Activated naive CD4-positive, alpha-beta T cell treated with anti-CD3 and anti-CD28 coated beads for 36 hours (primary cell): ENCODE measurements at regions of chr5 and their contacts with region 1.

Region 1: GRCh38 chr5:14399054-14399692 is 182.4 kb upstream of the OTULINL start:
- DNase-seq: no peak
- H3K4me3 Mint-ChIP-seq: no peak overlapping the region
- H3K27ac Mint-ChIP-seq: no peak overlapping the region
- H3K4me1 Mint-ChIP-seq: peaks cover 12% of the 10 kb centered on the region
- H3K27me3 Mint-ChIP-seq: no peaks in the 10 kb centered on the region

Region 2: DNA sequence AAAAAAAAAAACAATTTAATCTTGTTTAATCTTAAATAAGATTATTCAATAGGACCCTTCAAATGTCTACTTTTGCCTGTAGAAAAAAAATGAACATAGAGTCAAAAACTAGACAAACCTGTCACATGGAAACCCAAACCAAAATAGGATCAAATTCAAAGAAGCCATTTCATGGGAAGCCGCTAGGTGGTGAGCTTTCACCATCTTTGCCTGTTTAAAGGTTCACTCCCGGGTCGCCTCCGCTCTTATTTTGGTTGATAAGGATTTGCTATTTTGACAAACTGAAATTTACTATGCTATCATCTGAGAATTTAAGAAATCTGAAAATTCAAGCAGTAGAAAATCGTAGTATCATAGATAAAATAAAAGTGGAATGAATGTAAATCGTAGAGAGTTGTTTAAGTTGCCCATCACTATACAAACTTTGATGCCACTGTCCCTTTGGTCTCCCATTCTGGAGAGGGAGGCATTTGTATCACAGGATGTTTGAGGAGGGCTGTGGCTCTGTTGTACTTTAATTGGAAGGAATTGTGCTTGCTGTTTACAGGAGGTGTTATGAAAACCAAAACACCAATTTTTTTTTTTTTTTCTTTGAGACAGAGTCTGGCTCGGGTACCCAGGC is 411.2 kb before region 1 on chr5:
- CTCF ChIA-PET with region 1: no interaction called
- intact Hi-C with region 1: loop called (anchors 2 kb)
- DNase-seq: peak; percentile 55
- H3K4me3 Mint-ChIP-seq: no peak overlapping the region
- H3K27ac Mint-ChIP-seq: no peak overlapping the region
- H3K4me1 Mint-ChIP-seq: no peaks in the 10 kb centered on the region
- H3K27me3 Mint-ChIP-seq: no peaks in the 10 kb centered on the region

Region 3: DNA sequence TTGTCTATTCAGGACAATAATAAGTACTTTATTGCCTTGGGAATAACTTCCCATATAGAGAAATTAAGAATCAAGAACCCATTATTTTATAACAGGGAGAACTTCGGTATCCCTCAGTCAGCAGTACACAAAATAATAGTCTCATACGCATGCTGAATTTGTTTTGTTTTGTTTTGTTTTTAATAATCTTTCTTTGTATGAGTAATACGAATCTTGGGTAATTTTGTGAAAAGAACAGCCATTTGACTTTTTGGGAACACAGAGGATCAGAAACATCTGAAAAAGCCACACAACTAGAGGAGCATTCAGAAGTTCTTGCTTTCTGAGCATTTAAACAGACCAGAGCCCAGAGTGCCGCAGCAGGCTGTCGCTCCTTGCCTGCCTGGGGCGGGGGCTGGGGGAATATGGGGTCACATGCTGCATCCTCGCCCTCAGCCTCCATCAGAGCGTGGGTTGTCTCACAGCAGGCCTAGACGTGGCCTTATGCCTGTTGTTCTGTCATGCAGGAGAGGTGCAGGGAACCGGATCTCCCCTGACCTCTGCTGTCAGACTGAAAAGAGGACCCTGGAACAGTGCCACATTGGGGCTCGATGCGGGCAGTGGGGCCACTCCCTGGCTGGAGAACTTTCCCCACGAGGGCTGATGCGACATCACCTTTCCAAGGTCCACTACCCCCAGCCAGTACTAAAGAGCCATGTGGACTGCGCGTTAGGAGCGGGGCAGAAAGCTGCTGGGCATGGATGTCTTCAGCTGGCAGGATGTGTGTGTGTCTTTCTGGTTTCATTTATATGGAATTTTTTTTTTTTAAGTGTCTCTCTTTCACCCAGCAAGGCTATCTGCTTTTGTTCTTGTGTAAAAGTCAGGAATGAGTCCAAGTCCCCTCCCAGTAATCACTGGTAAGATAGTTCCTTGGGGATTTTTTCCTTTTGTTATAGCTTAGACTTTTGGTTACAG is 49.1 kb after region 1 on chr5:
- CTCF ChIA-PET with region 1: no interaction called
- intact Hi-C with region 1: no loop called
- DNase-seq: no peak
- H3K4me3 Mint-ChIP-seq: no peak overlapping the region
- H3K27ac Mint-ChIP-seq: no peak overlapping the region
- H3K4me1 Mint-ChIP-seq: peaks cover 3% of the 10 kb centered on the region
- H3K27me3 Mint-ChIP-seq: no peaks in the 10 kb centered on the region

Region 4: GRCh38 chr5:14479143-14479696 is 80.0 kb after region 1 on chr5:
- CTCF ChIA-PET with region 1: interaction called, 11 read pairs
- intact Hi-C with region 1: no loop called
- DNase-seq: no peak
- H3K4me3 Mint-ChIP-seq: no peak overlapping the region
- H3K27ac Mint-ChIP-seq: no peak overlapping the region
- H3K4me1 Mint-ChIP-seq: peaks cover 5% of the 10 kb centered on the region
- H3K27me3 Mint-ChIP-seq: no peaks in the 10 kb centered on the region

Region 5: DNA sequence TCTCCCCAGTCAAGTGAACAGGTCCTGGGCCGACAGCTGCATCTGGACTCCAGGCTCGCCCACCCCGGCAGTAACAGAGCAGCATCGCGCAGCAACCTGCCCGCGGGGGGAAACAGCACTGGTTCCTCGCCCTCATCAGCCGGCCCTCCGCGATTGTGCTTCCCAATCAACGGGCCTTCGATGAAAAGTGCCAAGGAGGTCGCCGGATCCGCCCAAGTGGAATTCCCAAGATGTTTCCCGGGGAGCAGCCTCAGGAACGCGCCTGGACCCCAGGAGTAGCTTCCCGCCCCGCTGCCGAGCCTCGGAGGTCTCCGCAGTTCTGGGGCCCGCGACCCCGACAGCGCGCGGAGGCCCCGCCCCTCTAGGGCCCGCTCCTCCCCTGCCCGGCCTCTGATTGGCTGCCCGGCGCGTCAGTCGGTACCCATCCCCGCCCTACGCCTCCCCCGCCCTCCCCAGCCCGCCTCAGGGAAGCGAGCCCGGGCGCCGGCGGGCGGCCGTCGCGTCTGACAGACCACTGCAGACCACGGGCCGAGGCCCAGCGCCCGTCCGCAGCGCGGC is 182.2 kb after region 1 on chr5 and contains the start of gene OTULINL:
- CTCF ChIA-PET with region 1: interaction called, 5 read pairs
- intact Hi-C with region 1: loop called (anchors 1 kb)
- DNase-seq: peak; percentile 91
- H3K4me3 Mint-ChIP-seq: peak within 1 kb of the TSS; percentile 75
- H3K27ac Mint-ChIP-seq: peak within 1 kb of the TSS; percentile 70
- H3K4me1 Mint-ChIP-seq: peaks cover 26% of the 10 kb centered on the region
- H3K27me3 Mint-ChIP-seq: peaks cover 2% of the 10 kb centered on the region
- total RNA-seq, gene OTULINL: 9.1 to 10.6 TPM

Region 6: GRCh38 chr5:14650052-14650451 is 250.9 kb after region 1 on chr5:
- CTCF ChIA-PET with region 1: interaction called, 73 read pairs
- intact Hi-C with region 1: loop called (anchors 1 kb)
- DNase-seq: no peak
- H3K4me3 Mint-ChIP-seq: no peak overlapping the region
- H3K27ac Mint-ChIP-seq: no peak overlapping the region
- H3K4me1 Mint-ChIP-seq: peaks cover 2% of the 10 kb centered on the region
- H3K27me3 Mint-ChIP-seq: peaks cover 15% of the 10 kb centered on the region

Region 7: GRCh38 chr5:15132434-15133405 is 733.5 kb after region 1 on chr5:
- CTCF ChIA-PET with region 1: no interaction called
- intact Hi-C with region 1: no loop called
- DNase-seq: no peak
- H3K4me3 Mint-ChIP-seq: no peak overlapping the region
- H3K27ac Mint-ChIP-seq: no peak overlapping the region
- H3K4me1 Mint-ChIP-seq: no peaks in the 10 kb centered on the region
- H3K27me3 Mint-ChIP-seq: no peaks in the 10 kb centered on the region